ENCODE measurements at regions of chr15 and their contacts with region 1.

Region 1: GRCh38 chr15:43868406-43868805 is 41.6 kb downstream of the WDR76 start:
- DNase-seq: no peak
- H3K4me3 ChIP-seq: no peak overlapping the region
- H3K27ac ChIP-seq: no peak overlapping the region
- H3K4me1 ChIP-seq: no peaks in the 10 kb centered on the region
- H3K27me3 ChIP-seq: no peaks in the 10 kb centered on the region
- CTCF ChIP-seq: no peak
- POLR2A ChIP-seq: no peak

Region 2: DNA sequence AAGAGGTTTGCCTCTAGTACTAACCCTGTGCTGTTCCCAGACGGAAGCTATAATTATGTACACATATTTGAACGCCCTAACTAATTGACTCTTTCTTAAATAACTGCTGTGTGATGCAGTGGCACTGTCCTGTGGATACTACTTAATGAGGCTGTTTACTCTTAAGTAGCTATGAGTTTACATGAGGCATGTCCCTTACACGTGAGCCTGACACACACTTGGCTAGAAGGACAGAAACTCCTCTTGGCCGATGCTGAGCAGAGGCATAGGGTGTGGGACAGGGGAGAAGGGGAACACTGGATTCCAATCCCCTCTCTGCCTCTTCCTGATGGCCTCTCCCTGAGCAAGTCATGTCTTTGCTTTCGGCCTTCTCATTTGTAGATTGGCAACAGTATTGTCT is 1917.9 kb before region 1 on chr15:
- intact Hi-C with region 1: loop called (anchors 5 kb)
- DNase-seq: no peak
- H3K4me3 ChIP-seq: no peak overlapping the region
- H3K27ac ChIP-seq: peak overlapping the region; percentile 49
- H3K4me1 ChIP-seq: peaks cover 22% of the 10 kb centered on the region
- H3K27me3 ChIP-seq: no peaks in the 10 kb centered on the region
- CTCF ChIP-seq: no peak
- POLR2A ChIP-seq: no peak

Region 3: DNA sequence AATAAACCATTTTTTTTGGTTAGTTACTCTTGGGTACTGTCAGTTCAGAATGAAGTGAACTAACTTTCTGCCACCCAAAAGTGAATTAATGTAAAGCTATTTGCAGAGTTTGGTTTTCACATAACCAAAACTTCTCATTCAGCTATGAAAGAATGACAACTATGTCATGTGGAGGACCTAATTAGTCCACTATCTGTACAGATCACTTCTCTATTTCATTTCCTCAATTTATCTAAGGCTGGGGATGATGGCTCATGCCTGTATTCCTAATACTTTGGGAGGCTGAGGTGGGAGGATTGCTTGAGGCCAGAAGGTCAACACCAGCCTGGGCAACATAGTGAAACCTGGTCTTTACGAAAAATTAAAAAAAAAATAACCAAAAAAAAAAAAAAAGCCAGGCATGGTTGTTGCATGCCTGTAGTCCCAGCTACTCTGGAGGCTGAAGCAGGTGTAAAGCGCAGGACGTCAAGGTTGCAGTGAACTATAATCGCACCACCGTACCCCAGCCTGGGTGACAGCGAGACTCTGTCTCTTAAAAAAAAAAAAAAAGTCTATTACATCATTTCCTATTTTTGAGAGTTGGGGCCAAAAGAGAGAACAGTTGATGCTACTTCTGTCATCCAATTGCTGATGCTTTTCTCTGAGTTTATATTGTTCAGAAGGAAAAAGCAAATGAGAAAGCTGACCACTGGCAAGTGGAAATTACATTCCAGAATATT is 59.3 kb before region 1 on chr15:
- intact Hi-C with region 1: no loop called
- DNase-seq: no peak
- H3K4me3 ChIP-seq: no peak overlapping the region
- H3K27ac ChIP-seq: no peak overlapping the region
- H3K4me1 ChIP-seq: no peaks in the 10 kb centered on the region
- H3K27me3 ChIP-seq: no peaks in the 10 kb centered on the region
- CTCF ChIP-seq: no peak
- POLR2A ChIP-seq: no peak

Region 4: GRCh38 chr15:44222478-44222877 is 354.1 kb after region 1 on chr15:
- intact Hi-C with region 1: no loop called
- DNase-seq: no peak
- H3K4me3 ChIP-seq: no peak overlapping the region
- H3K27ac ChIP-seq: no peak overlapping the region
- H3K4me1 ChIP-seq: no peaks in the 10 kb centered on the region
- H3K27me3 ChIP-seq: no peaks in the 10 kb centered on the region
- CTCF ChIP-seq: no peak
- POLR2A ChIP-seq: no peak